ENCODE measurements at regions of chr14 and their contacts with region 1.

Region 1: GRCh38 chr14:76337635-76338545 is 38.0 kb upstream of the ESRRB start:
- DNase-seq: no peak
- ATAC-seq: no peak
- H3K4me3 ChIP-seq: no peak overlapping the region
- H3K4me3 Mint-ChIP-seq: no peak overlapping the region
- H3K27ac ChIP-seq: no peak overlapping the region
- H3K27ac Mint-ChIP-seq: no peak overlapping the region
- H3K4me1 ChIP-seq: no peaks in the 10 kb centered on the region
- H3K4me1 Mint-ChIP-seq: no peaks in the 10 kb centered on the region
- H3K27me3 ChIP-seq: no peaks in the 10 kb centered on the region
- H3K27me3 Mint-ChIP-seq: peaks cover 11% of the 10 kb centered on the region
- CTCF ChIP-seq: no peak

Region 2: GRCh38 chr14:76352639-76353281 is 14.9 kb after region 1 on chr14:
- CTCF ChIA-PET with region 1: interaction called, 17 read pairs
- POLR2A ChIA-PET with region 1: no interaction called
- intact Hi-C with region 1: no loop called
- DNase-seq: peak; percentile 5 to 67 (median 50)
- ATAC-seq: no peak
- H3K4me3 ChIP-seq: no peak overlapping the region
- H3K4me3 Mint-ChIP-seq: peak overlapping the region; percentile 30
- H3K27ac ChIP-seq: no peak overlapping the region
- H3K27ac Mint-ChIP-seq: no peak overlapping the region
- H3K4me1 ChIP-seq: no peaks in the 10 kb centered on the region
- H3K4me1 Mint-ChIP-seq: peaks cover 4% of the 10 kb centered on the region
- H3K27me3 ChIP-seq: peaks cover 0 to 2% of the 10 kb centered on the region in 2 experiments
- H3K27me3 Mint-ChIP-seq: peaks cover 33% of the 10 kb centered on the region
- CTCF ChIP-seq: peak; percentile 51